ENCODE measurements at regions of chr2 and their contacts with region 1.

Region 1: DNA sequence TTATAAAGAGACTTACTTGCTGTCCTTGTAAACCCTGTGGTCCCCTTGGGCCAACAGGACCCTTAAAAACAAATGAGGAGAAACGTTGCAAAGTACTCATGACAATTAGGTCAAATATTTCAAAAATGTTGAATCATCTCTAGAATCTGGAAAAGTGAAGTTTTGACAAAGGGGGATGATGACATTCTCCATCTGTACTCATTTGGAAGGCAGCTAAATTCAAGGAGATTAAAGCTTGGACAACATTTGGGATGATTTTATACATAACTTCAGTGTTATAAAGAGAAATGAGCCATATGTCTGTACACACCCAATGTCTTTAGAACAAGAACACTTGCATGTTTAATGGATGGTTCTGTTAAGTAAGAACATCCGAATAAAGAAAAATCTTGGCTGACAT is 92.9 kb downstream of the COL5A2 start:
- DNase-seq: no peak
- ATAC-seq: no peak
- H3K4me3 ChIP-seq: no peak overlapping the region
- H3K4me3 Mint-ChIP-seq: no peak overlapping the region
- H3K27ac ChIP-seq: no peak overlapping the region
- H3K27ac Mint-ChIP-seq: no peak overlapping the region
- H3K4me1 ChIP-seq: no peaks in the 10 kb centered on the region
- H3K4me1 Mint-ChIP-seq: no peaks in the 10 kb centered on the region
- H3K27me3 ChIP-seq: no peaks in the 10 kb centered on the region
- H3K27me3 Mint-ChIP-seq: no peaks in the 10 kb centered on the region
- CTCF ChIP-seq: no peak

Region 2: GRCh38 chr2:188952901-188953300 is 133.8 kb before region 1 on chr2:
- CTCF ChIA-PET with region 1: no interaction called
- POLR2A ChIA-PET with region 1: no interaction called
- intact Hi-C with region 1: no loop called
- DNase-seq: no peak
- ATAC-seq: no peak
- H3K4me3 ChIP-seq: no peak overlapping the region
- H3K4me3 Mint-ChIP-seq: no peak overlapping the region
- H3K27ac ChIP-seq: no peak overlapping the region
- H3K27ac Mint-ChIP-seq: no peak overlapping the region
- H3K4me1 ChIP-seq: no peaks in the 10 kb centered on the region
- H3K4me1 Mint-ChIP-seq: no peaks in the 10 kb centered on the region
- H3K27me3 ChIP-seq: no peaks in the 10 kb centered on the region
- H3K27me3 Mint-ChIP-seq: no peaks in the 10 kb centered on the region
- CTCF ChIP-seq: no peak

Region 3: GRCh38 chr2:189096769-189097447 is 10.2 kb after region 1 on chr2:
- CTCF ChIA-PET with region 1: interaction called, 10 read pairs
- POLR2A ChIA-PET with region 1: no interaction called
- intact Hi-C with region 1: no loop called
- DNase-seq: no peak
- ATAC-seq: no peak
- H3K4me3 ChIP-seq: no peak overlapping the region
- H3K4me3 Mint-ChIP-seq: no peak overlapping the region
- H3K27ac ChIP-seq: no peak overlapping the region
- H3K27ac Mint-ChIP-seq: no peak overlapping the region
- H3K4me1 ChIP-seq: no peaks in the 10 kb centered on the region
- H3K4me1 Mint-ChIP-seq: no peaks in the 10 kb centered on the region
- H3K27me3 ChIP-seq: no peaks in the 10 kb centered on the region
- H3K27me3 Mint-ChIP-seq: no peaks in the 10 kb centered on the region
- CTCF ChIP-seq: no peak

Measured in B cell (primary cell).